AG04450 (cell line): ENCODE measurements at regions of chr19 and their contacts with region 1.

Region 1: DNA sequence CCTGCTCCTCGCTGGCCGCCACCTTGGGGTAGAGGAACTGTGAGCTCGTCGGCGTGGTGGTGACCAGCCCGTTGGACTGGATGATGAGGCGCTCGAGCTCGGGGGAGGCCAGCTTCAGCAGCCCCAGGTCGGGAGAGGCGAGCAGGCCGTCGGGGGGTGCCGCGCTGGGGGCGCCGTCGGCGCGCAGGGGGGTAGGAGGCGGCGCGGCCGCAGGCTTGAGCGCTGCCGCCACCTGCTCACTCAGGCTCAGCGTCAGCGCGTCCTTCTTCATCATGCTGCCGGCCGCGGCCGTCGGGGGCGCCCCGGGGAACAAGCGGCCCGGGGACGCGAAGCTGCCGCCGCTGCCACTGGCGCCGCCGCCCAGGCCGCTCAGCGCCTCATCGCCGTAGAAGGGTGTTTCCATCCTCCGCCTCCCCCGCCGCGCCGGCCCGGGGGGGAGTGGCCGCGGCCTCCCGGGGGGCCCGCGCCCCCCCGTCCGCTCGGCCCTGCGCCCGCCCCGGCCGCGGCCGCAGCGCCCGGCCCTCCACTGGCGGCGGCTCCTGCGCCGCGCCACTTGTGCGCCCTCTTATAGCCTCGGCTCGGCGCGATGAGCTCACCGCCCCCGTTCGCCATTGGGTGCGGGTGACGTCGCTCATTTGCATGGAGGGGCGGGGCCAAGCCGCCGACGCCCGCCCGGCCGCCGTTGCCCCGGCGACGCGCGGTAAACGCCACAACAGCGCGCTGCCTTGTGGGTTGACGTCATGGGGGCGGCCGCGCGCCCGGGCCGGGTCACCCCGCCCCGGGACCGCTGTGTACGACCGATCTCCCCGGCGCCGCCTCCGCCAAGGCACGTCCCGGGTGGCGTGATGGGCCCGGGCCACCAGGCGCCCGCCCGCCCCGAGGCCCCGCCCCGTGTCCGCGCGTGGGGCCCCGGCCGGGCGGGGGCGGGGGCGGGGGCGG is at the start of gene JUND:
- DNase-seq: peak; percentile 94
- H3K4me3 ChIP-seq: peak within 1 kb of the TSS; percentile 97
- H3K27ac ChIP-seq: peak within 1 kb of the TSS; percentile 99
- H3K27me3 ChIP-seq: no peaks in the 10 kb centered on the region
- CTCF ChIP-seq: no peak
- polyA plus RNA-seq, gene JUND: 48.6 and 67.8 TPM in 2 replicates

Region 2: GRCh38 chr19:18203863-18204393 is 77.4 kb before region 1 on chr19 and contains the start of gene RAB3A:
- CTCF ChIA-PET with region 1: interaction called, 7 read pairs
- POLR2A ChIA-PET with region 1: interaction called, 30 read pairs
- DNase-seq: peak; percentile 100
- H3K4me3 ChIP-seq: peak within 1 kb of the TSS; percentile 93
- H3K27ac ChIP-seq: peak within 1 kb of the TSS; percentile 100
- H3K27me3 ChIP-seq: no peaks in the 10 kb centered on the region
- CTCF ChIP-seq: no peak
- polyA plus RNA-seq, gene RAB3A: 2.8 and 6.1 TPM in 2 replicates

Region 3: DNA sequence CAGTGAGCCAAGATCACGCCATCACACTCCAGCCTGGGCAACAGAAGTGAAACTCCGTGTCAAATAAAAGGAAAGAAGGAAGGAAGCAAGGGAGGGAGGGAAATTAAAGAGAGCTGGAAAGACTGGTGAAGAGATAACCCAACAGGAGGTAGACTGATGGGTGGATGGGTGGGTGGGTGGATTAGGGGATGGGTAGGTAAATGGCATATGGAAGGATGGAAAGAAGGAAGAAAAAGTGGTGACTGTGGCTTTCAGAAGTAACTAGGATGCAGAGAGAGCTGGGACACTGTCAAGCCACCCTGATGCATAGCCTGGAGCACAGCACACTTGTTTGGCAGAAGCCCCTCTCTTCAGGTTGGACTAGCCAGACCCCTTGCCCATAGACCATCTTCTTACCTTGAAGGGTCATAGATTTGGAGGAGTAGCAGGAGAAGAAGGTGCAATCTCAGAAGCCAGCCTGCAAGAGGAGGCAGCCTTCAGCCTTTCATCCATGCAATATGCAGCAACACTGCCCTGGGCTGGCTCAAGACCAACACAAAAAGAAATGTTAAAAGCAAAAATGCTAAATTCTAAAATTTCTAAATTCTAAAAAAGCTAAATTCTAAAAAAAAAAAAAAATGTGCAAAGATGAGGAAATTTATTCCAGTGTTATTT is 12.2 kb before region 1 on chr19:
- CTCF ChIA-PET with region 1: interaction called, 19 read pairs
- POLR2A ChIA-PET with region 1: interaction called, 13 read pairs
- DNase-seq: no peak
- H3K4me3 ChIP-seq: no peak overlapping the region
- H3K27ac ChIP-seq: no peak overlapping the region
- H3K27me3 ChIP-seq: no peaks in the 10 kb centered on the region
- CTCF ChIP-seq: no peak

Region 4: DNA sequence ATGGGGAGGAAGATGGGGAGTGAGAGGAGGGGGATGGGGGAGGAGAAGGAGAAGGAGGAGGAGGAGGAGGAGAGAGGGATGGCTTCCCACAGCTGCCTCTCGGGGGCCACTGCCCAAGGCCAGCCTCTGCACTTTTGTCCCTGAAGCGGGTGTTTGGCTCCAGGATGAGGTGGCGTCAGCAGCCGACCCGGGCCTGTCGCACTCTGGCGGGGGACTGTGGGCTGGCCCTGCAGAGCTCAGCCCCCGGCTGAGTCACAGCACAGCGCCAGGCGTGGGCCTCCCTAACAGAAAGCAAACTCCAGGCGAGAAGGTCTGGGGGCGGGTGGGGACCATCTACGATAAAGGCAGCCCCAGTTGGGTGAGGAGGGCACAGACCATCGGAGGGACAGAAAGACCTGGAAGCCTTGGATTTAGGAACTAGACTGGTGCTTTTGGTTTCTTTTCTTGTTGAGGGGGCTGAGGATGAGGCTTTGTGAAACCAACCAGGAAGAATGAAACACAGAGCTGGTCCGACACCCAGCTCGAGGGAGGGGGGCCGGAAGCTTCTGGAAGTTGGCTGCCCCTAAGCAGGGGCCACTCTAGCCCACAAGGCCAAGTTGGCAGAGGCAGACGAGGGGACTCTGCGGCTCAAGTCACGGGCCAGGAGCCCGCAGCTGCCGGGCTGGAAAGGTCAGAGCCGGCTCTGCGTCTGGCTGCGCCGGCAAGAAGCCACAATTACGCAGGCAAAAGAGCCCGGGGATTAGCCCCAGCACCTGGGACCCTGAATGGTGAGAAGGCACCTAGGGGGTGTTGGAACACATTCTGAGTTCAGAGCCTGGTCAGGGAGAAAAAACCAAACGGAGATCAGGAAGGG is 23.3 kb after region 1 on chr19:
- CTCF ChIA-PET with region 1: interaction called, 7 read pairs
- POLR2A ChIA-PET with region 1: interaction called, 110 read pairs
- DNase-seq: no peak
- H3K4me3 ChIP-seq: peak overlapping the region; percentile 52
- H3K27ac ChIP-seq: peak overlapping the region; percentile 98
- H3K27me3 ChIP-seq: no peaks in the 10 kb centered on the region
- CTCF ChIP-seq: no peak

Region 5: GRCh38 chr19:18333662-18334389 is 52.5 kb after region 1 on chr19:
- CTCF ChIA-PET with region 1: interaction called, 122 read pairs
- POLR2A ChIA-PET with region 1: interaction called, 109 read pairs
- DNase-seq: no peak
- H3K4me3 ChIP-seq: no peak overlapping the region
- H3K27ac ChIP-seq: no peak overlapping the region
- H3K27me3 ChIP-seq: peaks cover 2% of the 10 kb centered on the region
- CTCF ChIP-seq: no peak

Region 6: GRCh38 chr19:18388100-18388959 is 107.0 kb after region 1 on chr19:
- CTCF ChIA-PET with region 1: interaction called, 14 read pairs
- POLR2A ChIA-PET with region 1: interaction called, 13 read pairs
- DNase-seq: no peak
- H3K4me3 ChIP-seq: peak overlapping the region; percentile 77
- H3K27ac ChIP-seq: no peak overlapping the region
- H3K27me3 ChIP-seq: no peaks in the 10 kb centered on the region
- CTCF ChIP-seq: peak; percentile 80